ENCODE measurements at regions of chr1 and their contacts with region 1.

Region 1: GRCh38 chr1:206982216-206982615 is 12.0 kb upstream of the FCAMR start:
- H3K4me3 ChIP-seq: no peak overlapping the region
- H3K27ac ChIP-seq: no peak overlapping the region
- H3K4me1 ChIP-seq: no peaks in the 10 kb centered on the region
- CTCF ChIP-seq: peak; percentile 63

Region 2: DNA sequence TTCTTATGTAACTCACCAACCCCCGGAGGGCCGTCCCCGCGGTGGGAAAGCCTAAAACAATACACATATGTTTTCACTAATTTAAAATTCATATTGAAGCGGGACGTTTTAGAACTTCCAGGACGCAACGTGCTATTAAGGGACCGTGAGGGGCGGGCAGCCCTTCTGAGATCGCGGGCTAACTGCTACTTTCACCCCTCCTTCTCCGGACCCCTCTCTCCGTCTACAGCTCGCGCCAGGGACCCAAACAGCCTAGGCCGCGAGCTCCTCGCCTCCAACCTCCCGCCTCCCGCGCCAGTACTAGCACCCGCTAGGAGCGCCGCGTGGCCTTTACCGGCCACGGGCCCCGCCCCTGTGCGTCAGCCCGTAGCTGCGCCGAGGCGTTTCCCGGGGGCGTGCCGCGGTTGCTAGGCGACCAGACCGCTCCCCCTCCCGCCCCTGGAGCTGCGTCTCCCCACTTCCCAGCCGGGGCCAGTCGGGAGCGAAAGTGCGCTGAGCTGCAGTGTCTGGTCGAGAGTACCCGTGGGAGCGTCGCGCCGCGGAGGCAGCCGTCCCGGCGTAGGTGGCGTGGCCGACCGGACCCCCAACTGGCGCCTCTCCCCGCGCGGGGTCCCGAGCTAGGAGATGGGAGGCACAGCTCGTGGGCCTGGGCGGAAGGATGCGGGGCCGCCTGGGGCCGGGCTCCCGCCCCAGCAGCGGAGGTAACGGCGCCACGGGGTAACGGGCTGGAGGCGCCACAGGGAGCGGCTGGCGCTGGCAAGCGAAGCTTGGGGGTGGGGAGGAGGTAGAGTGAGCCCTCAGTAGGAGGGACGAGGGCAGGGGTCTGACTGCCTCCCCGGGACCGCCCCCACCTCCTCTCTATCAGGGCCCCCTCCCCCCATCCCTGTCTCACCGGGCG is 346.9 kb before region 1 on chr1 and contains the start of gene DYRK3:
- CTCF ChIA-PET with region 1: interaction called, 15 read pairs
- POLR2A ChIA-PET with region 1: no interaction called
- H3K4me3 ChIP-seq: peak within 1 kb of the TSS; percentile 88
- H3K27ac ChIP-seq: peak within 1 kb of the TSS; percentile 56; the same call in 1 of the 2 replicates
- H3K4me1 ChIP-seq: peaks cover 11% of the 10 kb centered on the region
- CTCF ChIP-seq: peak; percentile 70

Region 3: DNA sequence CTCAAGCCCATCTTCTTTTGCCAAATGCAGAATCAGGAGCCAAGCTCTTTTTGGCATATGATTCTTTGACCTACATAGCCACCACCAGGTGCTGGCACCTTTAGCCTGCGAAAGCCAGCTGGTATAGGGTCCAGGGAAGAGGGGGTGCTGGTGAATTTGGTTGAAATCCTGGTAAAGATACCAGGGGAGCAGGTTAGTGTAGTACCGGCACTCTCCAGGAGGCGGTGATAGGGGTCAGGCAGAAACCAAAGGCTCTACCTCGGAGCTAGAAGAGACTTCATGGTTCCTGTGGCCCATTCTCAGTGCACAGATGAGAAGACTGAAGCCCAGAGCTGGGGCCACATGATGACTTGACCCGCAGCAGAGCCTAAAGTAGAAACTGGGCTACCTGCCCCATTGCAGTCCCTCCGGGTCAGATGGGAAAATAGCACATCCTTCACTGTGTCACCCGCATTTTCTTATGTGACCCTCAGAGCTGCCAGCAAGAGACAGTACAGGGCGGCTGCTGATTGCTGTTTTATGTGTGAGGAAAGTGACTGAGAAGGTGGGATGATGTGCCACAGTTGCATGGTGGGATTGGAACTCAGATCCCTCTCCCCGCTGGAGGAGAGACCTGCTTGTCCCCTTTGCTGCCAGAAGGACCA is 247.6 kb before region 1 on chr1:
- CTCF ChIA-PET with region 1: interaction called, 39 read pairs
- POLR2A ChIA-PET with region 1: no interaction called
- H3K4me3 ChIP-seq: no peak overlapping the region
- H3K27ac ChIP-seq: no peak overlapping the region
- H3K4me1 ChIP-seq: no peaks in the 10 kb centered on the region
- CTCF ChIP-seq: peak; percentile 53

Region 4: GRCh38 chr1:206878456-206878855 is 103.8 kb before region 1 on chr1:
- CTCF ChIA-PET with region 1: no interaction called
- POLR2A ChIA-PET with region 1: no interaction called
- H3K4me3 ChIP-seq: no peak overlapping the region
- H3K27ac ChIP-seq: no peak overlapping the region
- H3K4me1 ChIP-seq: no peaks in the 10 kb centered on the region
- CTCF ChIP-seq: no peak

Region 5: DNA sequence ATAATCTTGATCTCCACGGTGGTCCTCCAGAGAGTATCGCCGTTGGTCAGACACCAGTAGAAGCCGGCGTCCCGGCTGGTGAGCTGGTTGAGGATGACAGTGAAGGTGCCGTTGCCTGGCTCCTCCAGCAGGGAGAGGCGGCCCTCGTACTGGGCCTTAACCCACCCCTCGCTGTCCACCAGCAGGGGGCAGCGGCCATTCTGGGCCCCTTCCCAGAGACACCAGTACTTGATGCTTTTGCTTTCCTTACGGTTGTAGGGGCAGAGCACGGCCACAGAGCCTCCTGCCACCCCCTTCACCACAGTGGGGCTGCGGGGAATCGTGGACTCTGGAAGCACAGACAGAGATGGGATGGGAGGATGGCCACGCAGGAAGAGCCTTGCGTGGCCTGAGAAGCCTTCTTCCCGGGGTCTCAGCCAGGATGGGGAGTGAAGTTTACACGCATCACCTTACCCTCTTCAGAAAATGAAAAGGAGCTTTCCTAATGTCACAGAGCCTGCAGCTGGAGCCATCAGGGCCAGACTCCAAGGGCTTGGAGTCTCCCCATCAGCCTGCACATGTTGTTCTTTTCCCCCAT is 46.6 kb before region 1 on chr1:
- CTCF ChIA-PET with region 1: interaction called, 45 read pairs
- POLR2A ChIA-PET with region 1: no interaction called
- H3K4me3 ChIP-seq: no peak overlapping the region
- H3K27ac ChIP-seq: no peak overlapping the region
- H3K4me1 ChIP-seq: no peaks in the 10 kb centered on the region
- CTCF ChIP-seq: peak; percentile 51; the same call in 1 of the 2 replicates

Region 6: GRCh38 chr1:206971029-206971655 is 11.1 kb before region 1 on chr1:
- CTCF ChIA-PET with region 1: interaction called, 39 read pairs
- POLR2A ChIA-PET with region 1: no interaction called
- H3K4me3 ChIP-seq: no peak overlapping the region
- H3K27ac ChIP-seq: no peak overlapping the region
- H3K4me1 ChIP-seq: no peaks in the 10 kb centered on the region
- CTCF ChIP-seq: no peak

Region 7: GRCh38 chr1:207004981-207005830 is 23.0 kb after region 1 on chr1:
- CTCF ChIA-PET with region 1: interaction called, 12 read pairs
- POLR2A ChIA-PET with region 1: no interaction called
- H3K4me3 ChIP-seq: no peak overlapping the region
- H3K27ac ChIP-seq: no peak overlapping the region
- H3K4me1 ChIP-seq: no peaks in the 10 kb centered on the region
- CTCF ChIP-seq: peak; percentile 77

Measured in HEK293 (cell line).